Mammary epithelial cell (primary cell): ENCODE measurements at regions of chr7 and their contacts with region 1.

Region 1: GRCh38 chr7:123635551-123636359 is 19.9 kb upstream of the LMOD2 start:
- DNase-seq: no peak
- H3K4me3 ChIP-seq: no peak overlapping the region
- H3K27ac ChIP-seq: no peak overlapping the region
- H3K4me1 ChIP-seq: peaks cover 17% of the 10 kb centered on the region
- H3K27me3 ChIP-seq: no peaks in the 10 kb centered on the region
- CTCF ChIP-seq: peak; percentile 73 to 74

Region 2: GRCh38 chr7:123494193-123494796 is 141.5 kb before region 1 on chr7:
- CTCF ChIA-PET with region 1: interaction called, 3 read pairs
- dilution Hi-C with region 1: no loop called
- in situ Hi-C with region 1: no loop called
- intact Hi-C with region 1: loop called (anchors 5 kb)
- DNase-seq: peak; percentile 11
- H3K4me3 ChIP-seq: no peak overlapping the region
- H3K27ac ChIP-seq: no peak overlapping the region
- H3K4me1 ChIP-seq: no peaks in the 10 kb centered on the region
- H3K27me3 ChIP-seq: no peaks in the 10 kb centered on the region
- CTCF ChIP-seq: peak; percentile 63 to 67

Region 3: GRCh38 chr7:123615344-123615743 is 20.4 kb before region 1 on chr7:
- CTCF ChIA-PET with region 1: no interaction called
- dilution Hi-C with region 1: no loop called
- in situ Hi-C with region 1: no loop called
- intact Hi-C with region 1: no loop called
- DNase-seq: no peak
- H3K4me3 ChIP-seq: no peak overlapping the region
- H3K27ac ChIP-seq: no peak overlapping the region
- H3K4me1 ChIP-seq: no peaks in the 10 kb centered on the region
- H3K27me3 ChIP-seq: no peaks in the 10 kb centered on the region
- CTCF ChIP-seq: no peak

Region 4: GRCh38 chr7:123674399-123675180 is 38.8 kb after region 1 on chr7:
- CTCF ChIA-PET with region 1: no interaction called
- dilution Hi-C with region 1: no loop called
- in situ Hi-C with region 1: no loop called
- intact Hi-C with region 1: loop called (anchors 2 kb)
- DNase-seq: peak; percentile 82
- H3K4me3 ChIP-seq: peak overlapping the region in 1 of 3 experiments; percentile 22
- H3K27ac ChIP-seq: peak overlapping the region; percentile 84
- H3K4me1 ChIP-seq: peaks cover 27% of the 10 kb centered on the region
- H3K27me3 ChIP-seq: no peaks in the 10 kb centered on the region
- CTCF ChIP-seq: no peak

Region 5: DNA sequence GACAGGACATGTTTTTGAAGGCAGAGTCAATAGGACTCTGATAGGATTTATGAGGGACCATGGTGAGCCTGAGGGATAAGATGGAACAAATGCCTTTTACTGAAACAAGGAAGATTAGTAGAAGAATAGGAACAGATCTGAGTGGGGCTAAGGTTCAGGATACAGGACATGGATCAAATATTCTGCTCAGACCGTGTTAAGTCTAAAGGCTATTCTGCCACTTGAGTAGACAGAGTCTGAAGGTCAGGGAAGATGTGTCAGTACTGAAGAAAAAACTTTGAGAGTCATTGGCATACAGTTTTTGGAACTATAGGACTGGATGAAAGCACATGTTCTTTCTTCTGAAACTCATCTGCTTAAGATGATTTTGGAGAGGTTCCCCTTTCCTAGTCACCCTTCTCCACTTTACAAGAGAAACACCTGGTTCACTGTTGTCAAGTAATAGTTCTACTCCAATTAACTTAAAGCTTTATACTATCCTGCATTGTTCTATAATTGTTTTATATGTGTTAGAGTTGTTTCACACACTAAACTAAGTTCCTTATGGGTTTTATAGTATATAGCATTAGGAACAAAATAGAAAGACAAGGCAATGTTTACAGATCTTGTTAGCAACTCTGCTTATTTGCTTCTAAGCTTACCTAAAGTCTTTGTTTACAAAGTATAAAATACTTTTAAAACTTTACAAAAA is 69.6 kb after region 1 on chr7:
- CTCF ChIA-PET with region 1: no interaction called
- dilution Hi-C with region 1: no loop called
- in situ Hi-C with region 1: no loop called
- intact Hi-C with region 1: loop called (anchors 1 kb)
- DNase-seq: no peak
- H3K4me3 ChIP-seq: no peak overlapping the region
- H3K27ac ChIP-seq: no peak overlapping the region
- H3K4me1 ChIP-seq: no peaks in the 10 kb centered on the region
- H3K27me3 ChIP-seq: no peaks in the 10 kb centered on the region
- CTCF ChIP-seq: no peak

Region 6: GRCh38 chr7:123797673-123798527 is 162.1 kb after region 1 on chr7:
- CTCF ChIA-PET with region 1: no interaction called
- dilution Hi-C with region 1: no loop called
- in situ Hi-C with region 1: no loop called
- intact Hi-C with region 1: loop called (anchors 1 kb)
- DNase-seq: peak; percentile 96
- H3K4me3 ChIP-seq: peak overlapping the region; percentile 11 to 47 (median 18)
- H3K27ac ChIP-seq: peak overlapping the region; percentile 51
- H3K4me1 ChIP-seq: peaks cover 13% of the 10 kb centered on the region
- H3K27me3 ChIP-seq: no peaks in the 10 kb centered on the region
- CTCF ChIP-seq: peak; percentile 36 to 50

Region 7: GRCh38 chr7:123871998-123872867 is 236.5 kb after region 1 on chr7:
- CTCF ChIA-PET with region 1: no interaction called
- dilution Hi-C with region 1: no loop called
- in situ Hi-C with region 1: loop called (anchors 25 kb)
- intact Hi-C with region 1: loop called (anchors 1 kb)
- DNase-seq: peak; percentile 45
- H3K4me3 ChIP-seq: no peak overlapping the region
- H3K27ac ChIP-seq: no peak overlapping the region
- H3K4me1 ChIP-seq: no peaks in the 10 kb centered on the region
- H3K27me3 ChIP-seq: no peaks in the 10 kb centered on the region
- CTCF ChIP-seq: peak; percentile 73 to 76